ENCODE measurements at regions of chr10 and their contacts with region 1.

Region 1: GRCh38 chr10:7525314-7526016 is 114.6 kb upstream of the SFMBT2 start:
- DNase-seq: peak; percentile 38
- H3K4me3 ChIP-seq: no peak overlapping the region
- H3K27ac ChIP-seq: no peak overlapping the region
- H3K4me1 ChIP-seq: no peaks in the 10 kb centered on the region
- H3K27me3 ChIP-seq: no peaks in the 10 kb centered on the region
- CTCF ChIP-seq: peak; percentile 65 to 72

Region 2: DNA sequence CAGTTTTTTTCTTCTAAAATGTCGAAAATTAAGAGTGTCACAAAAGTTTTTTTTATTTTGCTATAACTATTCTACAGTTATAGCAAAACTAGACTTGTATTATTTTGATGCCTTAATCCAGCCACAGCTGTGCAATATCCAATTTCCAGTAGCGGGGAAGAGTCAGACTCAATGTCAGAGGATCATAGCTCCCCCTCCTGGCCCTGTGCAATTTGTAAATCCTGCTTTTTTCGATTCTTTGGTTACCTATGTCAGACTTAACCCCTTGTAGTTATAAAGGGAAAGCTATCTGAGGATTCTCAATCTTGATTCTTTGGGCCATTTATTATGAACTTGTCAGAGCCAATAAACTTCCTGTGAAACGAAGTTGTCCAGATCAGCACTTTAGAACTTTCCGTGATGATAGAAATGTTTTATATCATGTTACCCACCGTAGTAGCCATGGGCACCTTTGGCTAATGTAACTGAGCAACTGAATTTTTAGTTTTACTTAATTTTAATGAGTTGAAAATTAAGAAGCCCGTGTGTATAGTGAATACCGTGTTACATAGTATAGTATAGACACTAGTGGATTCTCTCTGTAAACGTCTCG is 857.7 kb before region 1 on chr10:
- CTCF ChIA-PET with region 1: no interaction called
- dilution Hi-C with region 1: no loop called
- in situ Hi-C with region 1: no loop called
- intact Hi-C with region 1: loop called (anchors 10 kb)
- DNase-seq: peak; percentile 37
- H3K4me3 ChIP-seq: no peak overlapping the region
- H3K27ac ChIP-seq: no peak overlapping the region
- H3K4me1 ChIP-seq: peaks cover 4% of the 10 kb centered on the region
- H3K27me3 ChIP-seq: peaks cover 2% of the 10 kb centered on the region
- CTCF ChIP-seq: peak; percentile 60 to 76

Region 3: GRCh38 chr10:7561216-7561893 is 35.9 kb after region 1 on chr10:
- CTCF ChIA-PET with region 1: no interaction called
- dilution Hi-C with region 1: no loop called
- in situ Hi-C with region 1: no loop called
- intact Hi-C with region 1: no loop called
- DNase-seq: no peak
- H3K4me3 ChIP-seq: no peak overlapping the region
- H3K27ac ChIP-seq: no peak overlapping the region
- H3K4me1 ChIP-seq: no peaks in the 10 kb centered on the region
- H3K27me3 ChIP-seq: no peaks in the 10 kb centered on the region
- CTCF ChIP-seq: no peak

Region 4: DNA sequence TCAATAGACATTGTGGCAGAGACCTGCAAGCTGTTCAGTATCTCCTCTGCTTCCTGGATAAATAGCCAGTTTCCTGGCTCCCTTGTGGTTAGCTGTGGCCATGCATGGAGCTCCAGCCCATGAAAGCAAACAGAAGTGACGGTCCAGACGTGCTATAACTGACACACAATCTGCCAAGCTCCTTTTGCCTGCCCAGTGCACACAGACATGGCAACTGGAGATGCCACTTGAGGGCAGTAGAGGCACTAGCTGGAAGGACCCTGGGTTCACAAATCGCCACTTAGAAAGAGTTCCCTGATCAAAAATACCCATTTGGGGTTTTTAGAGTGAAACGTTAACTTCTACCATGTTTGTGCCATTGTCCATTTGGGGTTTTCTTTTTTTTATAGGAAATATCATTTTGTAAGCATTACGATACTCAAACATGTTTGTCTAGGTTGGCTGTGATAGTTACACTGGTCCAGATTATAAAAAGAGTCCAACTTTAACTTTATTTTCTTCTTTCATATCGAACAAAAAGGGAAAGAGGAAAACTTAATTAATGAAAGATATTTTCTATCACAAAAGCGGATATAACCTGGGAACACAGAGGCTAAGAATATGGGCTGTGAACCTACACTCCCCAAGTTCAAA is 231.0 kb after region 1 on chr10:
- CTCF ChIA-PET with region 1: no interaction called
- dilution Hi-C with region 1: no loop called
- in situ Hi-C with region 1: no loop called
- intact Hi-C with region 1: loop called (anchors 5 kb)
- DNase-seq: peak; percentile 14
- H3K4me3 ChIP-seq: no peak overlapping the region
- H3K27ac ChIP-seq: no peak overlapping the region
- H3K4me1 ChIP-seq: no peaks in the 10 kb centered on the region
- H3K27me3 ChIP-seq: no peaks in the 10 kb centered on the region
- CTCF ChIP-seq: peak; percentile 30 to 57

Region 5: GRCh38 chr10:7872041-7872442 is 346.6 kb after region 1 on chr10:
- CTCF ChIA-PET with region 1: no interaction called
- dilution Hi-C with region 1: no loop called
- in situ Hi-C with region 1: no loop called
- intact Hi-C with region 1: loop called (anchors 1 kb)
- DNase-seq: peak; percentile 27
- H3K4me3 ChIP-seq: peak overlapping the region; percentile 47 to 78 (median 47)
- H3K27ac ChIP-seq: no peak overlapping the region
- H3K4me1 ChIP-seq: no peaks in the 10 kb centered on the region
- H3K27me3 ChIP-seq: no peaks in the 10 kb centered on the region
- CTCF ChIP-seq: peak; percentile 51 to 69

Region 6: GRCh38 chr10:8873310-8873709 is 1347.8 kb after region 1 on chr10:
- CTCF ChIA-PET with region 1: no interaction called
- dilution Hi-C with region 1: no loop called
- in situ Hi-C with region 1: loop called in 1 of 2 experiments (anchors 25 kb)
- intact Hi-C with region 1: loop called (anchors 5 kb)
- DNase-seq: peak; percentile 37
- H3K4me3 ChIP-seq: no peak overlapping the region
- H3K27ac ChIP-seq: no peak overlapping the region
- H3K4me1 ChIP-seq: no peaks in the 10 kb centered on the region
- H3K27me3 ChIP-seq: no peaks in the 10 kb centered on the region
- CTCF ChIP-seq: peak; percentile 37 to 54

Region 7: DNA sequence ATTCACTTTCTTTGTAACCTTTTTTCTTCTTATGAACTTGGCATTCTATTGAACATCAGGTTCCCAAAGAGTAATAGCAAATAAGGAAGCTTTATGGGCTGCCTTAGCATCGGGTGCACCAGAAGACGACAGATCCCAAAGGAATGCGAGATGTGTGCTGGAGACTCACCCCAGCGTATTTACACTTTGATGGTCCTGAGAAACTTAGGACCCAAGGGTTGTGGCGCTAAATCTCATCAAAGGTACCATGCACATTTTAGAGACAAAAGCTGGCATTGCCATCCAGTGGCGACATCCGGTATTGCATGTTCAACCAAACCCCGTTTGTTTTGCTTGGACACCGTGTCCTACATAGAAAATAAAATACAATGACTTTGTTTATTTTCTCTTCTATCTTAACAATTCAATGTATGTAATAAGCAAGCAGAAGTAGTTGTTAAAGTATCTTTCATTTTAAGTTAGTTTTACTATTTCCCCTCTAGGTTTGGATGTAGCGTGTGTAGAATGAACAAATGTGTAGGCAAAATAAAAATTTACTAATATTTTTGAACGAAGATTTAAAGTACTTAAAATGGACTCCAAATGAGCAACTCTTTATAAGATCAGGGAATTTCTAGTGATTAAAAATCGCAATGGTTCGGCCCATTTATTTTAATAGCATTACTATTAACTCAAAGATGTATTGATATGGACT is 1683.8 kb after region 1 on chr10:
- CTCF ChIA-PET with region 1: no interaction called
- dilution Hi-C with region 1: no loop called
- in situ Hi-C with region 1: no loop called
- intact Hi-C with region 1: loop called (anchors 2 kb)
- DNase-seq: peak; percentile 46
- H3K4me3 ChIP-seq: no peak overlapping the region
- H3K27ac ChIP-seq: no peak overlapping the region
- H3K4me1 ChIP-seq: no peaks in the 10 kb centered on the region
- H3K27me3 ChIP-seq: no peaks in the 10 kb centered on the region
- CTCF ChIP-seq: peak; percentile 90